PC-3 (cell line): ENCODE measurements at regions of chr16 and their contacts with region 1.

Region 1: GRCh38 chr16:81723098-81723723 is 55.9 kb upstream of the PLCG2 start:
- DNase-seq: peak; percentile 89
- ATAC-seq: peak; percentile 94
- H3K4me3 ChIP-seq: no peak overlapping the region
- H3K27ac ChIP-seq: no peak overlapping the region
- H3K4me1 ChIP-seq: no peaks in the 10 kb centered on the region
- H3K27me3 ChIP-seq: no peaks in the 10 kb centered on the region
- CTCF ChIP-seq: peak; percentile 72

Region 2: GRCh38 chr16:81366316-81366932 is 356.8 kb before region 1 on chr16:
- CTCF ChIA-PET with region 1: no interaction called
- POLR2A ChIA-PET with region 1: no interaction called
- intact Hi-C with region 1: loop called (anchors 1 kb)
- DNase-seq: peak; percentile 68
- ATAC-seq: peak; percentile 59
- H3K4me3 ChIP-seq: no peak overlapping the region
- H3K27ac ChIP-seq: no peak overlapping the region
- H3K4me1 ChIP-seq: no peaks in the 10 kb centered on the region
- H3K27me3 ChIP-seq: no peaks in the 10 kb centered on the region
- CTCF ChIP-seq: peak; percentile 70

Region 3: GRCh38 chr16:81623363-81624102 is 99.7 kb before region 1 on chr16:
- CTCF ChIA-PET with region 1: no interaction called
- POLR2A ChIA-PET with region 1: no interaction called
- intact Hi-C with region 1: loop called (anchors 1 kb)
- DNase-seq: peak; percentile 54
- ATAC-seq: no peak
- H3K4me3 ChIP-seq: no peak overlapping the region
- H3K27ac ChIP-seq: no peak overlapping the region; the same call in 1 of the 2 replicates
- H3K4me1 ChIP-seq: peaks cover 17% of the 10 kb centered on the region
- H3K27me3 ChIP-seq: no peaks in the 10 kb centered on the region
- CTCF ChIP-seq: peak; percentile 69